ENCODE measurements at regions of chr17 and their contacts with region 1.

Region 1: GRCh38 chr17:29682054-29682453 is 59.3 kb upstream of the CORO6 start:
- DNase-seq: peak; percentile 86
- H3K4me3 ChIP-seq: no peak overlapping the region
- H3K27ac ChIP-seq: peak overlapping the region; percentile 95
- H3K4me1 ChIP-seq: peaks cover 48% of the 10 kb centered on the region
- H3K27me3 ChIP-seq: no peaks in the 10 kb centered on the region
- CTCF ChIP-seq: peak; percentile 34

Region 2: GRCh38 chr17:29483503-29483902 is 198.6 kb before region 1 on chr17:
- CTCF ChIA-PET with region 1: no interaction called
- POLR2A ChIA-PET with region 1: no interaction called
- intact Hi-C with region 1: no loop called
- DNase-seq: no peak
- H3K4me3 ChIP-seq: no peak overlapping the region
- H3K27ac ChIP-seq: no peak overlapping the region
- H3K4me1 ChIP-seq: no peaks in the 10 kb centered on the region
- H3K27me3 ChIP-seq: no peaks in the 10 kb centered on the region
- CTCF ChIP-seq: no peak

Region 3: DNA sequence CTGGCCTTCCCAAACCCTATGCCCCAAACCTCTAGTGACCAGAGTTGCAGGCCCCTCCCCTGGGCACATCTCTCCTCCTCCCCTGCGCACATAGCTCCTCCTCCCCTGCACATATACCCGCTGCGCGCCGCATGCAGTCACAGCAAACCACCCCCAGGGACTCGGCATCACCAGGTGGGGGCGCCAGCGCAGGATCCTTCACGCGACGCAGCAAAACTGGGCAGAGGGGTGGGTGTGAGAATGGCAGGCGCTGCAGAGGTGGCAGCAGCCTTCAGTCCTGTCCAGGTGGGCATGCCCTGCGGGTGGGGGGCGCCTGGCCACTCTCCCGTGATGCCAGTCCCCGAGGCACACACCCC is 65.0 kb before region 1 on chr17:
- CTCF ChIA-PET with region 1: interaction called, 10 read pairs
- POLR2A ChIA-PET with region 1: no interaction called
- intact Hi-C with region 1: no loop called
- DNase-seq: peak; percentile 93
- H3K4me3 ChIP-seq: no peak overlapping the region
- H3K27ac ChIP-seq: no peak overlapping the region
- H3K4me1 ChIP-seq: peaks cover 47% of the 10 kb centered on the region
- H3K27me3 ChIP-seq: no peaks in the 10 kb centered on the region
- CTCF ChIP-seq: peak; percentile 96

Region 4: DNA sequence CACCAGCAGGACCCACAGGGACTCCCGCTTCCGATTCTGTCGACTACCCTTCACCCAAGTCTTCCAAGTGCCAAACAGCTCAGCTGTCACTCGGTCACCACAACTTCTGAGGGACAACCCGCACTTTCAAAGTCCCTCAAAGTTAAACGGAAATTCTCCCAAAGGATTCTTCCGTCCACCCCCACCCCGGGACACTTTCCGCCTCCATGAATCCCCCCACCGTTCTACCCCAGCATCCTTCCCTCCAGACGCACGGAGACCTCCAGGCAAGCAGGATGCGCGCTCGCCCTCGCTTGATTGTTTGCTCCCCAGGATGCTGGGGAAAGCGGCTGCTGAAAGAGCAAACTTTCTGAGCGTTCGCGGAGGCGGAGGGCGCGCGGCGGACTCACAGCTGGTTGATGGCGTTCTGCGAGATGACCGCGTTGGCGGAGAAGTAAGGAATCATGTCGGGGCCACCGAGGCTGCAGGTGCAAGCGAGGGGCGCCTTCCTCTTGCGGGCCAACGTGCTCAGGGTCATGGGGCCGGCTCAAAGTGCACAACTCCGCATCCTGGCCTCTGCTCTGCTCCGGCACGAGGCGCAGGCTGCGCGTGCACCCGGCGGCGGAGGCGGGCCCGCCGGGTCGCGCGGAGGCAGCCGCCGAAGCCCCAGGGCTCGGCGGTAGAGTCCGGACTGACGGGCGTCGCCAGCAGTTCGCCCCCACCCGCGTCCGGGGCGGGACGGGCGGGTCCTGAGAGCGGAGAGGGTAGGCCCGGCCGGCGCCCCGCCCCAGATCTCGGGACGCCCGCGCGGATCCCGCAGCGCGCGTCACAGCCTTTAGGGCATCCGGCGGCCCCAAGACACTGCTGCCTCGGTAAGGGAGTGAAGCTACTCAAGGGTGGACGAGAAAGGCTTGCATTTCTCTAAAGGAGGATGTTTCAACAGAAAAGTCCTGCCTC is 79.0 kb after region 1 on chr17:
- CTCF ChIA-PET with region 1: no interaction called
- POLR2A ChIA-PET with region 1: no interaction called
- intact Hi-C with region 1: loop called (anchors 10 kb)
- DNase-seq: peak; percentile 95
- H3K4me3 ChIP-seq: peak overlapping the region; percentile 79
- H3K27ac ChIP-seq: peak overlapping the region; percentile 76
- H3K4me1 ChIP-seq: peaks cover 46% of the 10 kb centered on the region
- H3K27me3 ChIP-seq: no peaks in the 10 kb centered on the region
- CTCF ChIP-seq: no peak

Region 5: DNA sequence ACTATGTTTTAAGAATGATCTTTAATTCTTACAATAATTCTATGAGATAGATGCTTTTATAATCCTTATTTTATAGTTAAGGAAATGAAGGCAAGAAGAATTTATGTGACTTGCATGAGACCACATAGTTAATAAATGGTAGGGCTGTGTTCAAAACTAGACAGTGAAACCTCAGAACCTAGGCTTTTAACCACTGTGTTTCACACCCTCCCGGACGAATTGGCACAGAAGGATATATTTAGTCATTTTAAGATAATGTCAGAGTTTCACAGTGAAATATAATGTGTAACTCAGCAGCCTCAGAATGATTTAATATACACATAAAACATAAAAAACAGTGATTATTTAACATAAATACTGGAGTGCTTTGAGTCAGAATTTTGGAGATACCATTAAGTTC is 491.6 kb after region 1 on chr17:
- CTCF ChIA-PET with region 1: no interaction called
- POLR2A ChIA-PET with region 1: interaction called, 10 read pairs
- intact Hi-C with region 1: no loop called
- DNase-seq: no peak
- H3K4me3 ChIP-seq: no peak overlapping the region
- H3K27ac ChIP-seq: no peak overlapping the region
- H3K4me1 ChIP-seq: no peaks in the 10 kb centered on the region
- H3K27me3 ChIP-seq: no peaks in the 10 kb centered on the region
- CTCF ChIP-seq: no peak

Measured in A673 (cell line).